HepG2 (cell line): ENCODE measurements at regions of chr3 and their contacts with region 1.

Region 1: DNA sequence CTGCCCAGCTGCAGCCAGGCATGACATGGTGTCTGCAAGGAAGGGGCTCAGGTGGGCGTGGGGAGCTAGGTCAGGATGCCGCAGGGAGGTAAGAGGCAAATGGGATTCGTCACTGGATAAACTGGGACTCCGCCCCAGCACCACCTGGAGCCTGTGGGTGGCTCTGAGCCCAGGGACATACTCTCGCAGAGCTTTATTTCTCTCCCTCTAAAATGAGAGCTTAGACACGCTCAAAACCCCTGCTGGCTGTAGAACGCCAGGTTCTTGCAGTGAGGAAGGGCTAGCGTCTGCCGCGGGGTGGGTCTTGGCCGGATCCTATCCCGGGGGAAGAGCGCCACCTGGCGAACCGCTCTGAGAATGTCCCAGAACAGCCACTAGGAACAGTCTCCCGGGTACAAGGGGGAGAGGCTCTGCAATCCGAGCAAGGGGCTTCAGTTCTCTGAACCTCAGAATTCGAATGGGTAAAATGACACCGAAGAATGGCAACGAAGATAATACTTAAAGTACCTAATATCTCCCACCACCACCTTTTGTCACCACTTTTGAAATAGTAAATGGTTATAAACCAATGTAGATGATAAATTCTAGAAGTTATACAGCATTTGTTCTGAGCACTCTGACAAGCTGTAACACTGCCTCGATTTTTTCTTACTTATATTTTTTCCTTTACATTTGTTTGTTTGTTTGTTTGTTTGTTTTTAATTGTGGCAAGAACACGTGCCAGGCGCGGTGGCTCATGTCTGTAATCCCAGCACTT is 53.2 kb upstream of the SRGAP3 start:
- DNase-seq: peak; percentile 64
- ATAC-seq: peak; percentile 98
- H3K4me3 ChIP-seq: no peak overlapping the region
- H3K27ac ChIP-seq: no peak overlapping the region
- H3K4me1 ChIP-seq: no peaks in the 10 kb centered on the region
- H3K27me3 ChIP-seq: peaks cover 0 to 1% of the 10 kb centered on the region in 2 experiments; a peak in 2 of 5 replicates
- CTCF ChIP-seq: peak; percentile 94
- EP300 ChIP-seq: no peak
- POLR2A ChIP-seq: no peak
- RAD21 ChIP-seq: peak; percentile 95

Region 2: GRCh38 chr3:8970971-8971589 is 331.5 kb before region 1 on chr3:
- CTCF ChIA-PET with region 1: interaction called, 33 read pairs
- POLR2A ChIA-PET with region 1: no interaction called
- in situ Hi-C with region 1: loop called (anchors 5 kb)
- intact Hi-C with region 1: loop called (anchors 1 kb)
- DNase-seq: peak; percentile 54
- ATAC-seq: peak; percentile 52
- H3K4me3 ChIP-seq: no peak overlapping the region
- H3K27ac ChIP-seq: no peak overlapping the region
- H3K4me1 ChIP-seq: peaks cover 38% of the 10 kb centered on the region
- H3K27me3 ChIP-seq: no peaks in the 10 kb centered on the region; a peak in 1 of 5 replicates
- CTCF ChIP-seq: peak; percentile 89
- EP300 ChIP-seq: no peak
- POLR2A ChIP-seq: no peak
- RAD21 ChIP-seq: peak; percentile 88

Region 3: DNA sequence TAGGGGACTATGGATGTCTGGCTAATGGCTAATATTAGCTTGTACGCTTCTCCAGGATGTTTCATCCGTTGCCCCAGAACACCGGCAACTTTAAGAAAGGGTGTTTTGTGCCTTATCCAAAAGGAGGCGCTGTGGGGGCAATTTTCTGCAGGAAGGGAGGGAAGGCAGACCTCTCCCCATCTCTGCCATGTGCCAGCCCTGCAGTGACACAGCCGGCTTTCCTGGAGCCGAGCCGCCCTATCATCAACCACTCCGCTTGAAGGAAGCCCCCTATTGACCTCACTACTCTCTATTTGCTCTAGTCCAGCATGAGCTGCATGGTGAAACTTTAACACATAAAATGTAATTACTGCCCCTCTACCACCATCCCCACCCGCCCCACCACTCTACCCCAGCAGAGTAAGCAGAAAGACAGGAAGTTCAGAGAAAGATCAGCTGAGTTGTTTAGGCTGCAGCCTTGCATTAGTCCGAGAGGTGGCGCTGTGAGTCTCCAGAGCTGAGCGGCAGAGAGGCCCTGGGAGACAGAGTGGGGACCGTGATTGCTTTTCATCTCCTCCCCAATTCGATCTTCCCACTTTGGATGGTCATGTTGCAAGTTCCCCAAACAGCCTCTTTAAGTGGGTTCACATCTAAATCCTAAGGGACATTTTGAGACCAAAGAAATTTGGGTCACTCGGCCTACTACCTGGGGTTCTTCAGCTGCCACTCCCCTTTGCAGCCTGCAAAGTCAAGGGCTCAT is 314.8 kb before region 1 on chr3:
- CTCF ChIA-PET with region 1: interaction called, 10 read pairs
- POLR2A ChIA-PET with region 1: no interaction called
- in situ Hi-C with region 1: no loop called
- intact Hi-C with region 1: loop called (anchors 5 kb)
- DNase-seq: peak; percentile 36
- ATAC-seq: peak; percentile 84
- H3K4me3 ChIP-seq: no peak overlapping the region
- H3K27ac ChIP-seq: no peak overlapping the region
- H3K4me1 ChIP-seq: peaks cover 18% of the 10 kb centered on the region
- H3K27me3 ChIP-seq: peaks cover 0 to 5% of the 10 kb centered on the region in 2 experiments; a peak in 2 of 5 replicates
- CTCF ChIP-seq: peak; percentile 75
- EP300 ChIP-seq: no peak
- POLR2A ChIP-seq: no peak
- RAD21 ChIP-seq: no peak

Region 4: GRCh38 chr3:9201266-9201665 is 101.3 kb before region 1 on chr3:
- CTCF ChIA-PET with region 1: no interaction called
- POLR2A ChIA-PET with region 1: no interaction called
- in situ Hi-C with region 1: no loop called
- intact Hi-C with region 1: no loop called
- DNase-seq: no peak
- ATAC-seq: no peak
- H3K4me3 ChIP-seq: no peak overlapping the region
- H3K27ac ChIP-seq: no peak overlapping the region
- H3K4me1 ChIP-seq: peaks cover 21% of the 10 kb centered on the region
- H3K27me3 ChIP-seq: 0 out of 5 replicates have a peak, but pooled peaks cover 0 to 3% of the 10 kb centered on the region in 2 experiments
- CTCF ChIP-seq: no peak
- EP300 ChIP-seq: no peak
- POLR2A ChIP-seq: no peak
- RAD21 ChIP-seq: no peak